Activated CD4-positive, alpha-beta T cell treated with anti-CD3 and anti-CD28 coated beads, Interleukin-2, amount 10 ng/mL, durations not matched to agents 24 days and 14 days (primary cell): ENCODE measurements at regions of chr7 and their contacts with region 1.

Region 1: GRCh38 chr7:129952653-129953560 is at the start of gene UBE2H:
- DNase-seq: peak; percentile 95
- H3K4me3 Mint-ChIP-seq: no peak within 1 kb of the TSS
- H3K27ac Mint-ChIP-seq: peak within 1 kb of the TSS; percentile 100
- H3K4me1 Mint-ChIP-seq: peaks cover 17% of the 10 kb centered on the region
- H3K27me3 Mint-ChIP-seq: peaks cover 5% of the 10 kb centered on the region
- total RNA-seq, gene UBE2H: 21.7 and 24.2 TPM in 2 replicates

Region 2: GRCh38 chr7:129224251-129225205 is 728.4 kb before region 1 on chr7 and contains the start of gene AHCYL2:
- intact Hi-C with region 1: loop called (anchors 2 kb)
- DNase-seq: peak; percentile 98
- H3K4me3 Mint-ChIP-seq: peak within 1 kb of the TSS; percentile 87
- H3K27ac Mint-ChIP-seq: peak within 1 kb of the TSS; percentile 96
- H3K4me1 Mint-ChIP-seq: peaks cover 24% of the 10 kb centered on the region
- H3K27me3 Mint-ChIP-seq: no peaks in the 10 kb centered on the region
- total RNA-seq, gene AHCYL2: 10.7 and 11.1 TPM in 2 replicates

Region 3: DNA sequence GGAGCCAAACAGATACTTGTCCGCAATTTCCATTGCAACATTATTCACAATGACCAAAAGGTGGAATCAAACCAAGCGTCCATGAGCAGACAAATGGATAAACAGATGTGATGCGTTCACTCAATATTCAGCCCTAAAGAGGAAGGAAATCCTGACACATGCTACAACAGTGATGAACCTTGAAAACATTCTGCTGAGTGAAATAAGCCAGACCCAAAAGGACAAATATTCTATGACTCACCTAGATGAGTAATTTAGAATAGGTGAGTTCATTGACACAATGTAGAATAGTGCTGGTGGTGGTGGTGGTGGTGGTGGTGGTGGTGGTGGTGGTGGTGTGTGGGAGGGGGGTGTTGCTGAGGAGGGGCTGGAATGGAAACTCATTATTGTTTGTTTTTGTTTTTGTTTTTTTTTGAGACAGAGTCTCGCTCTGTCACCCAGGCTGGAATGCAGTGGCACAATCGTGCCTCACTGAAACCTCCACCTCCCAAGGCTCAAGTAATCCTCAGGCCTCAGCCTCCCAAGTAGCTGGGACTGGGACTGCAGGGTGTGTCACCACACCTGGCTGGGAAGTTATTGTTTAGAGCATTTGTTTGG is 422.0 kb before region 1 on chr7:
- intact Hi-C with region 1: loop called (anchors 10 kb)
- DNase-seq: peak; percentile 61
- H3K4me3 Mint-ChIP-seq: no peak overlapping the region
- H3K27ac Mint-ChIP-seq: peak overlapping the region; percentile 76
- H3K4me1 Mint-ChIP-seq: peaks cover 11% of the 10 kb centered on the region
- H3K27me3 Mint-ChIP-seq: peaks cover 5% of the 10 kb centered on the region

Region 4: DNA sequence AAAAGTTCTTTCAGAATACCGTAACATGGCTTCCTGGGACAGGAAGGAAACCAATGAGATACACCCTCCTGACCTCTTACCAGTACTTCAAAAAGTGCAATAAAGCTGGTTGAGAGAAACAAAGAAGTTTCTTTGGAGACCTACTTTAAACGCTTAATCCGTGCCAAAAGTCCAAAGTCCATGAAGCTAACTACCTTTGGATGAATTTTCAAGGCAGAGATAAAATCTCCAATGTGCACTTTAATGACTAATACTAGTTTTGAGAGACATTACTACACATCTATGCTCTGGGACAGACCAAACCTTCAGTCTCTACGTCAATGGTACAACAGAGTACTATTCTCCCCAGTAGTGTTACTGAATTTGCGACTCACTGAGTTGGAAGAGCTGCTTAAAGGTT is 46.2 kb before region 1 on chr7:
- intact Hi-C with region 1: loop called (anchors 2 kb)
- DNase-seq: no peak
- H3K4me3 Mint-ChIP-seq: peak overlapping the region; percentile 37
- H3K27ac Mint-ChIP-seq: no peak overlapping the region
- H3K4me1 Mint-ChIP-seq: peaks cover 20% of the 10 kb centered on the region
- H3K27me3 Mint-ChIP-seq: no peaks in the 10 kb centered on the region

Region 5: GRCh38 chr7:130182990-130183389 is 230.1 kb after region 1 on chr7:
- intact Hi-C with region 1: loop called (anchors 10 kb)
- DNase-seq: no peak
- H3K4me3 Mint-ChIP-seq: no peak overlapping the region
- H3K27ac Mint-ChIP-seq: peak overlapping the region; percentile 78
- H3K4me1 Mint-ChIP-seq: peaks cover 20% of the 10 kb centered on the region
- H3K27me3 Mint-ChIP-seq: no peaks in the 10 kb centered on the region

Region 6: GRCh38 chr7:131147604-131148003 is 1194.7 kb after region 1 on chr7:
- intact Hi-C with region 1: no loop called
- DNase-seq: no peak
- H3K4me3 Mint-ChIP-seq: no peak overlapping the region
- H3K27ac Mint-ChIP-seq: no peak overlapping the region
- H3K4me1 Mint-ChIP-seq: no peaks in the 10 kb centered on the region
- H3K27me3 Mint-ChIP-seq: peaks cover 15% of the 10 kb centered on the region